CD8-positive, alpha-beta T cell (primary cell): ENCODE measurements at regions of chr7 and their contacts with region 1.

Region 1: GRCh38 chr7:77536413-77537135 is 521 bp upstream of the PTPN12 start:
- DNase-seq: peak; percentile 95 to 97 (median 96)
- ATAC-seq: peak; percentile 92
- H3K4me3 ChIP-seq: peak overlapping the region; percentile 79 to 96
- H3K4me3 Mint-ChIP-seq: peak overlapping the region; percentile 97
- H3K27ac ChIP-seq: peak overlapping the region; percentile 53 to 63
- H3K27ac Mint-ChIP-seq: peak overlapping the region; percentile 89
- H3K4me1 ChIP-seq: peaks cover 4% of the 10 kb centered on the region
- H3K4me1 Mint-ChIP-seq: peaks cover 22% of the 10 kb centered on the region
- H3K27me3 ChIP-seq: no peaks in the 10 kb centered on the region
- H3K27me3 Mint-ChIP-seq: no peaks in the 10 kb centered on the region
- CTCF ChIP-seq: no peak

Region 2: GRCh38 chr7:77331938-77332695 is 204.5 kb before region 1 on chr7:
- CTCF ChIA-PET with region 1: no interaction called
- POLR2A ChIA-PET with region 1: no interaction called
- intact Hi-C with region 1: no loop called
- DNase-seq: peak in 7 of 9 experiments; percentile 15 to 84 (median 33)
- ATAC-seq: peak; percentile 67
- H3K4me3 ChIP-seq: no peak overlapping the region
- H3K4me3 Mint-ChIP-seq: no peak overlapping the region
- H3K27ac ChIP-seq: peak overlapping the region in 1 of 2 experiments; percentile 10
- H3K27ac Mint-ChIP-seq: no peak overlapping the region
- H3K4me1 ChIP-seq: peaks cover 34% of the 10 kb centered on the region
- H3K4me1 Mint-ChIP-seq: peaks cover 43% of the 10 kb centered on the region
- H3K27me3 ChIP-seq: no peaks in the 10 kb centered on the region
- H3K27me3 Mint-ChIP-seq: no peaks in the 10 kb centered on the region
- CTCF ChIP-seq: peak; percentile 46

Region 3: DNA sequence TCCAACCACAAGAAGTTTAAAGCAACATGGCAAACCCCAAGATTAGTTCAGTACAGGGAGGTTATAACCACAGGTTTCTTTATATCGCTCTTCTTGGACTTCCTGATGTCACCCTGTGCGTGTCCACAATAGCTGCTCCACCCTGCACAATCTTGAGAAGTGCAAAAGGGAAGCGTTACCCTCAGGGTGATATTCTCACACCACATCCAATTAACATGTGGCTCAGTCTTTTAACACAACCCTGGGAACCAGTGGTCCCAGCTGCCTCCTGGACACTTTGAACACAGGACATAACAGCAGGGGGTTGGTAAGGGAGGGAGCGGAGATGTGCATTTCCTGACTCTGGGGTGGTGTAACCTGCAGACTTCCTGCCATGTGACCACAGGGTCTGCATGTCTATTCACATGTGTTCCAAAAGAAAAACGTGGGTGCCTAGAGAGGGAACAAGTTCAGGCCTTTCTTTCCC is 185.0 kb before region 1 on chr7:
- CTCF ChIA-PET with region 1: no interaction called
- POLR2A ChIA-PET with region 1: no interaction called
- intact Hi-C with region 1: loop called (anchors 2 to 5 kb)
- DNase-seq: peak; percentile 8 to 92 (median 59)
- ATAC-seq: peak; percentile 73
- H3K4me3 ChIP-seq: peak overlapping the region in 1 of 2 experiments; percentile 22
- H3K4me3 Mint-ChIP-seq: peak overlapping the region; percentile 77
- H3K27ac ChIP-seq: peak overlapping the region; percentile 25 to 61
- H3K27ac Mint-ChIP-seq: peak overlapping the region; percentile 93
- H3K4me1 ChIP-seq: peaks cover 65% of the 10 kb centered on the region
- H3K4me1 Mint-ChIP-seq: peaks cover 79% of the 10 kb centered on the region
- H3K27me3 ChIP-seq: no peaks in the 10 kb centered on the region
- H3K27me3 Mint-ChIP-seq: no peaks in the 10 kb centered on the region
- CTCF ChIP-seq: no peak

Region 4: DNA sequence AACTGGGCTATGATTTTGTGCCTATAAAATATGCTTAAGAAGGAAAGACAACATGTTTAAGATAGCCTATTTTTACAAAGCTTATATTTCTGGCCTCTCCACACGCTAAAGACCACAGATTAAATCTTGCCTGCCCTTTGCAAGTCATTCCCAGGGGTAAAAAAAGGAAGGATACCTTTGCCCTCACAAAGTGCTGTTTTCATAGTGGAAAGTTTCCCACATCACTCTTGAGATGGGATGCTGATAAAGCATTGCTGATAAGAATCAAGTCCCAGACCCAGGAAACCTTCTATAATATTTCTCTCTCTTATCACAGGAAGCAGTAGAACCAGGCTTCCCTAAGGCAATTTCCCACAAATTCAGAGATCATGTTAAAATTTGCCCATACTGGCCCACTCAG is 177.0 kb before region 1 on chr7:
- CTCF ChIA-PET with region 1: no interaction called
- POLR2A ChIA-PET with region 1: no interaction called
- intact Hi-C with region 1: loop called in 1 of 2 experiments (anchors 5 kb)
- DNase-seq: no peak
- ATAC-seq: no peak
- H3K4me3 ChIP-seq: no peak overlapping the region
- H3K4me3 Mint-ChIP-seq: no peak overlapping the region
- H3K27ac ChIP-seq: no peak overlapping the region
- H3K27ac Mint-ChIP-seq: no peak overlapping the region
- H3K4me1 ChIP-seq: peaks cover 10% of the 10 kb centered on the region
- H3K4me1 Mint-ChIP-seq: peaks cover 17% of the 10 kb centered on the region
- H3K27me3 ChIP-seq: no peaks in the 10 kb centered on the region
- H3K27me3 Mint-ChIP-seq: no peaks in the 10 kb centered on the region
- CTCF ChIP-seq: no peak

Region 5: DNA sequence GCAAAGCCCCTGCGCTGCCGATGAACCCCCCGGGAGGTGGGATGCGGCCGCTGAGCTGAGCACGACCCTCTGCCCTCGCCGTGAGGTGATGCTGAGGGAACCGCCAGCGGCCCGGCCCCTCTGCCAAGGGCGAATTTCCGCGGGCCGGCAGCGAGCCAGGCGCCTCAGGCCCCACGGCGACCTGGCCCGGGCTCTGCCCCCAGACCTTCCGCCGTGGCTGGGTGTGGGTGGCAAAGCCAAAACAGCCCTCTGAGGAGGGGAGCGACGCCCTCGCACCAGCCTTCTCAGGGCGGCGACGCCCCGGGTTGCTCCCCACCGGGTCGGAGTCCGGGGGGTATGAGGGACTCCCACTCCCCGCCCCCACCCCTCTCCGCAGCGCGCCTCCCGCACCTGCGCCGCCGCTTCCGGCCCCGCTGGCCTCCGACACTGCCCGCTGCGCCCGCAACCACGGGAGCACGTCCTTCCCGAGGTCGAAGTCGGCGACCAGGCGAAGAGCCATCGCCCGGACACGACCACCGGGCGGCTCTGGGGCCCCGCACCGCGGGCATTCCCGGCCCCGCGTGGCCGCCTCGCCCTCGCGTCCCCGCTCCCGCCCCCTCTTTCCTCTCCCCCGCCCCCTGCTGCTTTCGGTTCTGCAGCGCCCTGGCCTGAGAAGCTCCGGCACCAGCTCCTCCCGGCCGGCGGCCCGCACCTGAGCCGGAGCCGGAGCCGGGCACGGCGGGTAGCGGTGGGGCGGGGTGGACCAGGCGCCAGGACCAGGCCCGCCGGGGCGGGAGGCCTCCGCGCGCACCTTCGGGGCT is 120.6 kb before region 1 on chr7 and contains the start of gene GSAP:
- CTCF ChIA-PET with region 1: no interaction called
- POLR2A ChIA-PET with region 1: no interaction called
- intact Hi-C with region 1: loop called in 1 of 2 experiments (anchors 2 kb)
- DNase-seq: peak in 8 of 9 experiments; percentile 28 to 78 (median 57)
- ATAC-seq: peak; percentile 66
- H3K4me3 ChIP-seq: peak within 1 kb of the TSS; percentile 76 to 77
- H3K4me3 Mint-ChIP-seq: peak within 1 kb of the TSS; percentile 83
- H3K27ac ChIP-seq: peak within 1 kb of the TSS; percentile 58 to 74
- H3K27ac Mint-ChIP-seq: peak within 1 kb of the TSS; percentile 72
- H3K4me1 ChIP-seq: peaks cover 30% of the 10 kb centered on the region
- H3K4me1 Mint-ChIP-seq: peaks cover 39% of the 10 kb centered on the region
- H3K27me3 ChIP-seq: no peaks in the 10 kb centered on the region
- H3K27me3 Mint-ChIP-seq: no peaks in the 10 kb centered on the region
- CTCF ChIP-seq: no peak
- total RNA-seq, gene GSAP: 11.9 to 12.8 TPM

Region 6: GRCh38 chr7:77428041-77428473 is 108.5 kb before region 1 on chr7:
- CTCF ChIA-PET with region 1: no interaction called
- POLR2A ChIA-PET with region 1: no interaction called
- intact Hi-C with region 1: no loop called
- DNase-seq: peak in 2 of 9 experiments; percentile 20 to 55
- ATAC-seq: no peak
- H3K4me3 ChIP-seq: no peak overlapping the region
- H3K4me3 Mint-ChIP-seq: no peak overlapping the region
- H3K27ac ChIP-seq: peak overlapping the region in 1 of 2 experiments; percentile 74
- H3K27ac Mint-ChIP-seq: no peak overlapping the region
- H3K4me1 ChIP-seq: peaks cover 17% of the 10 kb centered on the region
- H3K4me1 Mint-ChIP-seq: peaks cover 22% of the 10 kb centered on the region
- H3K27me3 ChIP-seq: no peaks in the 10 kb centered on the region
- H3K27me3 Mint-ChIP-seq: no peaks in the 10 kb centered on the region
- CTCF ChIP-seq: no peak

Region 7: DNA sequence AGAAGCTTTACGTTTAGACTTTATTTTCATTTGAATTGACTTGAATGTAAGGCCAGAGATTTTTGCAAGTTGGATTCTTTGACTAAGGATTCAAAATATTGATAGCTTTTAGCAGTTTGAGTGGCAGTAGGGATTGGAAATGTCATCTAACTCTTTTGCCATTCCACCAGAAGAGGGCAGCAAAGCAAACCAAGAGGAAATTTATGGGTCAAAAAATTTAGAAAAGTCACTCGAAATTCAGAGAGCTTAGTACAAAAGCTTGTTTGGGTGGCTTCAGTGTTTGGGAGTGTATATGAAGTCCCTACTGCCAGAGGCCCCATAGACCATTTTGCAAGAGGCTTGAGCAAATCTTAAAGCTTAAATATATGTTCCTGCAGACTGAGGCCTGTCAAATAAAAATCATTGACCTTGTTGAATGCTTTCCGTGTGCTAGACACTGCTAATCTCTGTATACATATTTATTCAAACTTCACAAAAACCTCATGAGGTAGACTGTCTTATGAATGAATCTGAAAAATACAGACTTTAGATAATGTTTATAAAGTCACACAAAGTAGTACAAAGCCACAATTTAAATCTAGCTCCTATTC is 115.1 kb after region 1 on chr7:
- CTCF ChIA-PET with region 1: no interaction called
- POLR2A ChIA-PET with region 1: no interaction called
- intact Hi-C with region 1: loop called in 1 of 2 experiments (anchors 5 kb)
- DNase-seq: peak in 5 of 9 experiments; percentile 13 to 62 (median 37)
- ATAC-seq: peak; percentile 44
- H3K4me3 ChIP-seq: no peak overlapping the region
- H3K4me3 Mint-ChIP-seq: no peak overlapping the region
- H3K27ac ChIP-seq: no peak overlapping the region
- H3K27ac Mint-ChIP-seq: no peak overlapping the region
- H3K4me1 ChIP-seq: no peaks in the 10 kb centered on the region
- H3K4me1 Mint-ChIP-seq: no peaks in the 10 kb centered on the region
- H3K27me3 ChIP-seq: no peaks in the 10 kb centered on the region
- H3K27me3 Mint-ChIP-seq: no peaks in the 10 kb centered on the region
- CTCF ChIP-seq: peak; percentile 78

Region 8: DNA sequence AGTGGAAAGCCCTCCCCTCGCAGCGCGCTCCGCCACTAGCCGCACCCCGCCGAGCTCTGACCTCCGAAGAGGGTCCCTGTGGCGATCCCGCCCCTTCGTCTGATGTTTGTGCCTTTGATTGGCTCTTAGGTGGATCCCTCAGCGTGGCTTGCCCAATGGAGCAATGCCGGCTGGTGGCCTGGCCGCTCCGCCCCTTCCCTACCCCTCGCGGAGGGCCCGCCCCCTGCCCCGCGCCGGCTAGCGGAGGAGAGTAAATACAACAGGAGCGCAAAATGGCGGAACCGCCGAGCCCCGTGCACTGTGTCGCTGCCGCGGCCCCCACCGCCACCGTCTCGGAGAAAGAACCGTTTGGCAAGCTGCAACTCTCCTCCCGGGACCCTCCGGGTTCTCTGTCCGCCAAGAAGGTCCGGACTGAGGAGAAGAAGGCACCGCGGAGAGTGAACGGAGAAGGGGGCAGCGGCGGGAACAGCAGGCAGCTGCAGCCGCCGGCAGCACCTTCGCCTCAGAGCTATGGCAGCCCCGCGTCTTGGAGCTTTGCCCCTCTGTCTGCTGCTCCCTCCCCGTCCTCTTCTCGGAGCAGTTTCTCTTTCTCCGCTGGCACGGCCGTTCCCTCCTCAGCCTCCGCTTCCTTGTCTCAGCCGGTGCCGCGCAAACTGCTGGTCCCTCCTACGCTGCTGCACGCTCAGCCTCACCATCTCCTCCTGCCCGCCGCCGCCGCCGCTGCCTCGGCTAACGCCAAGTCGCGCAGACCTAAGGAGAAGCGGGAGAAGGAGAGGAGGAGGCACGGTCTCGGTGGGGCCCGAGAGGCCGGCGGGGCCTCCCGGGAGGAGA is 159.8 kb after region 1 on chr7 and contains the start of gene RSBN1L:
- CTCF ChIA-PET with region 1: no interaction called
- POLR2A ChIA-PET with region 1: interaction called, 4 read pairs
- intact Hi-C with region 1: loop called (anchors 1 to 2 kb)
- DNase-seq: peak; percentile 96 to 99 (median 98)
- ATAC-seq: peak; percentile 93
- H3K4me3 ChIP-seq: peak within 1 kb of the TSS; percentile 98 to 99
- H3K4me3 Mint-ChIP-seq: peak within 1 kb of the TSS; percentile 99
- H3K27ac ChIP-seq: peak within 1 kb of the TSS; percentile 93 to 94
- H3K27ac Mint-ChIP-seq: peak within 1 kb of the TSS; percentile 98
- H3K4me1 ChIP-seq: peaks cover 27% of the 10 kb centered on the region
- H3K4me1 Mint-ChIP-seq: peaks cover 68% of the 10 kb centered on the region
- H3K27me3 ChIP-seq: no peaks in the 10 kb centered on the region
- H3K27me3 Mint-ChIP-seq: no peaks in the 10 kb centered on the region
- CTCF ChIP-seq: peak; percentile 34
- total RNA-seq, gene RSBN1L: 7.4 to 10.0 TPM

Region 9: DNA sequence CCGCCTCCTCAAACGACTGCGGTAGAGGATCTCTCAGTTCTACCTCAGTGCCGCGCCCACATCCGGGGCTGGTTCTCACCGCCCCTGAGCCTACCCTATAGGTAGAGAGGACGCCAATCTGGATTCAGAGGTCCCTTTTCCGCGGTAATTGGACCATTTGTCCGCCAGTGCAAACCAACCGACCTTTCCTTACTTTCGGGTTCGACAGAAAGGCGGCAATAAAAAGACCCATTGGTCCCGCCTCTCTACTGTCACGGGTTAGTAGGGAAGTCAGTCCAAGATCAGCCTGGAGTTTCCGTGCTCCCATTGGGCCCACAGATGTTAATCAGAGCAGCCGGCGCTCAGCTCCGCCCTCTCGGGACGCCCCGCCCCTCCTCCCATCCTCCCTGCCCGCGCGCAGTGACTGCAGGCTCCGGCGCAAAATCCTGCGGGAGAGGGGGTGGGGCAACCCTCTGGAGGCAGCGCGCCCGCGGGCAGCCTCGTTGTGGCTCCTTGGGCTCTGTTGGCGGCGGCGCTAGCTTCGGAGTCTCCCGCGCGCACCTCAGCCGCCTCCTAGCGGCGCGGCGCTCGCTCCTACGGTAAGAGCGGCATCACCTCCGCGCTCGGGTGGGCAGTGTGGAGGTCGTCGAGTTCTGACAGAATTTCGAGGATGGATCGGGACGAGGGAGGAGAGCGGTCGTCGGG is 262.0 kb after region 1 on chr7 and contains the starts of genes PHTF2 and TMEM60:
- CTCF ChIA-PET with region 1: no interaction called
- POLR2A ChIA-PET with region 1: no interaction called
- intact Hi-C with region 1: loop called (anchors 1 to 5 kb)
- DNase-seq: peak; percentile 85 to 98 (median 90)
- ATAC-seq: peak; percentile 88
- H3K4me3 ChIP-seq: peak within 1 kb of the TSS; percentile 70 to 81
- H3K4me3 Mint-ChIP-seq: peak within 1 kb of the TSS; percentile 97
- H3K27ac ChIP-seq: peak within 1 kb of the TSS; percentile 61 to 75
- H3K27ac Mint-ChIP-seq: peak within 1 kb of the TSS; percentile 96
- H3K4me1 ChIP-seq: peaks cover 39% of the 10 kb centered on the region
- H3K4me1 Mint-ChIP-seq: peaks cover 78% of the 10 kb centered on the region
- H3K27me3 ChIP-seq: no peaks in the 10 kb centered on the region
- H3K27me3 Mint-ChIP-seq: no peaks in the 10 kb centered on the region
- CTCF ChIP-seq: peak; percentile 67
- total RNA-seq, gene PHTF2: 10.2 to 14.1 TPM
- total RNA-seq, gene TMEM60: 2.2 TPM